Breast epithelium (tissue), 4 donors: ENCODE measurements at regions of chr6 and their contacts with region 1.

Region 1: DNA sequence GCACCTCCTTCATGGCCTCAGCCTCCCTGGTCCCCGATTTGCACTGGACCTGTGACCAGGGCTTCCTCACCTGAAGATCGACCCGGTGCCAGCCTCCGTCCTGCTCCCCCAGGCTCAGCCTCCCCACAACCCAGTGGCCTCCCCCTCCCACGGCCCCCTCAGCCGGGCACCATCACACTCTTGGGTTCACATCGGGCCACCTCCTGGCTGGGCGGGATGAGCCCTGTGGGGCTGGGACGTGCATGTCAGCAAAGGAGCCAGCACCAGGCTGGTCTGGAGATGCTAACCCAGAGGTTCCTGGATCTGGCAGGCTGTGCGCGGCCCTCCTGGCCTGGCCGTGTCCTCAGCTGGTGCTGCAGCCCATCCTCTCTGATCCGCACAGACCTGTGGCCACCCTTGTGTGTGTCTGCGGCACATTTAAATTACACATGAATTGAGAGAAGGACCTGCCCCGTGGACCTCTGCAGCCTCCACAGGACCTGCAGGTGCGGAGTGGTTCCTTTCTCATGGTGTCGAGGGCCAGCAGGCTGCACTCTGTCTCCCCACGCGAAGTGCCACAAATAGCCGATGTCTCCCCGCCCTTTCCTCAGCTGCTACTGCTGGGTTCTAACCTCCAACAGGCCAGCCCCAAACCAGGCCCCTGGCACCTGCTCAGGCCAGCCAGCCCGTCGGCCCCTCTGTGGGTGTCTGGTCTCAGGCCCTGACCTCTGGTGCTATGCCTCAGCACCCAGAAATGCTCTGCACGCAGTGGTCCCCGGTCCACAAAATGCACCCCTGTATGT is 237.5 kb downstream of the ERMARD start:
- DNase-seq: no peak
- H3K4me3 ChIP-seq: no peak overlapping the region
- H3K27ac ChIP-seq: no peak overlapping the region
- H3K4me1 ChIP-seq: no peaks in the 10 kb centered on the region
- H3K27me3 ChIP-seq: no peaks in the 10 kb centered on the region
- CTCF ChIP-seq: no peak
- POLR2A ChIP-seq: no peak

Region 2: DNA sequence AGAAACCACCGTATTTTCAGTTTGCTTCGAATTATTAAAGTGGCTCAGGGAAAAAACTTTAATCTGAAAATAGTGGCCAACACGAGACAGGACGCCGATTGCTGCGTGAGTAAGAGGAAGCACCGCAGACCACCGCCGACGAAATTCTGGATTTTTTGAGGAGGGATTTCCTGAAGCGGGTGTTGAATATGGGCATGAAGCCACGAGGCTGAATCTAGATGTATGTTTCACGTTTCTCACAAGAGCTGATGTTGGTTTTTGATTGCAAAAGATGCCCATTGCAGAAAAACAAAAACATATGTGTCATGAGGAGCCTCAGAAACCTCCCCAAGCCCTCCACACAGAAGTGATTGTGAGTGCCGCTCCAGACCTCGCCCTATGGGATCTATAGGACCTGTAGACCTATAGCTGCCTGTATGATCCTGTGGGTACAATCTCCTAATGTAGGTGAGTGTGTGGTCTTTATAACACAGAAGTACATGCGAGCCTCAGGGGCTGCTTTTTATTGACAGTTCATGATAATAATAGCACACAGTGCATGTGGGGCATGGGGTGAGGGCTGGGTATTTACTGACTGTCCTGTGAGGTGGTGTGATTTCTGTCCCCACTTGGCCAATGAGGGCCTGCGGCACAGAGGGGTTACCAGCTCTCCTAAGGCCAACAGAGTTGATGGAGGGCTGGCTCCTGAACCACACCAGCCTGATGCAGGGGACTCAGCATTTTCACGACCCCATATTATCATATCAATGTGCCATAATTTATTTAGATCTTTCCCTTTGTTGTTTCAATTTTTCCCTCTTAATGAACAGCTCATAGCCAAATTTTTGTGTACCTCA is 58.0 kb after region 1 on chr6:
- intact Hi-C with region 1: loop called (anchors 2 kb)
- DNase-seq: peak in 1 of 2 donors; percentile 38
- H3K4me3 ChIP-seq: no peak overlapping the region
- H3K27ac ChIP-seq: peak overlapping the region in 1 of 2 donors; percentile 12
- H3K4me1 ChIP-seq: no peaks in the 10 kb centered on the region
- H3K27me3 ChIP-seq: no peaks in the 10 kb centered on the region
- CTCF ChIP-seq: no peak
- POLR2A ChIP-seq: no peak